HepG2 (cell line): ENCODE measurements at regions of chr7 and their contacts with region 1.

Region 1: GRCh38 chr7:74579800-74580685 is 77.5 kb upstream of the GTF2I start:
- DNase-seq: peak; percentile 94
- ATAC-seq: peak; percentile 93
- H3K4me3 ChIP-seq: peak overlapping the region in 2 of 3 experiments; percentile 58; a peak in 4 of 6 replicates
- H3K27ac ChIP-seq: peak overlapping the region; percentile 97
- H3K4me1 ChIP-seq: peaks cover 64% of the 10 kb centered on the region
- H3K27me3 ChIP-seq: no peaks in the 10 kb centered on the region
- CTCF ChIP-seq: 0 out of 2 replicates have a peak, but pooled peaks have one; percentile 1
- EP300 ChIP-seq: peak; percentile 65 to 74; a peak in 3 of 4 replicates
- POLR2A ChIP-seq: peak; percentile 58 to 77; a peak in 3 of 4 replicates
- RAD21 ChIP-seq: peak; percentile 51; the same call in 1 of the 2 replicates

Region 2: GRCh38 chr7:74606101-74606908 is 26.3 kb after region 1 on chr7:
- CTCF ChIA-PET with region 1: no interaction called
- POLR2A ChIA-PET with region 1: interaction called, 43 read pairs
- in situ Hi-C with region 1: no loop called
- intact Hi-C with region 1: loop called (anchors 1 kb)
- DNase-seq: no peak
- ATAC-seq: no peak
- H3K4me3 ChIP-seq: no peak overlapping the region
- H3K27ac ChIP-seq: peak overlapping the region; percentile 22
- H3K4me1 ChIP-seq: peaks cover 37% of the 10 kb centered on the region
- H3K27me3 ChIP-seq: no peaks in the 10 kb centered on the region
- CTCF ChIP-seq: no peak
- EP300 ChIP-seq: no peak
- POLR2A ChIP-seq: no peak
- RAD21 ChIP-seq: no peak

Region 3: DNA sequence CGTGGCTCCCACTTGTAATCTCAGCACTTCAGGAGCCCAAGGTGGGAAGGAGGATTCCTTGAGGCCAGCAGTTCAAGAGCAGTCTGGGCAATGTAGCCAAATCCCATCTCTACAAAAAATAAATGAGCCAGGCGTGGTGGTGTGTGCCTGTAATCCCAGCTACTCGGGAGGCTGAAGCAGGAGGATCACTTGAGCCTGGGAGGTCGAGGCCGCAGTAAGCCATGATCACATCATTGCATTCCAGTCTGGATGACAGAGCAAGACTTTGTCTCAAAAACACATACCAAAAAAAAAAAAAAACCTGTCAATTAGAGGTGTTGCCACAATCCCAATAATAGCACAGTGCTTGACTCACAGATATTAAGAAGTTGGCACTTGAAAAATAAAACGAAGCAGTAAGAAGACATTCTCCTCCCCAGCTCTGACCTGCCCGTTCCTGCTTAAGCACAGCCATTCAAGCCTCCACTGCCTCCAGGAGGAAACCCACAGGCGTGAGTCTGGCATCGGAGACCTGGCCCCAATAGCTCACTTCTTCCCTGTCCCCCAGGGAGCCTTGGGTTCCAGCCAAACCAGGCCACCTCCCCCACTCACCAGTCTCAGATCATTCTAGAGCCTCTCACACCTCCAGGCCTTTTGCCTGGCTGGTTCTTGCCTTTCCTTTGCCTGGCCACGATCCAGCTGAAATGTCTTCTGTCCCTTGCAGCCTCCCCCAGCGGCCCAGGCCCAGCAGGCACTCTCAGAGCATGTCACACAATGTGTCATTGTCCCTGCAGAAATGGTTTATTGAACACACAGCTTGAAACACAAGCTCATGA is 32.2 kb after region 1 on chr7:
- CTCF ChIA-PET with region 1: no interaction called
- POLR2A ChIA-PET with region 1: interaction called, 43 read pairs
- in situ Hi-C with region 1: no loop called
- intact Hi-C with region 1: loop called (anchors 1 kb)
- DNase-seq: peak; percentile 74
- ATAC-seq: peak; percentile 30
- H3K4me3 ChIP-seq: peak overlapping the region in 1 of 3 experiments; percentile 50; a peak in 2 of 6 replicates
- H3K27ac ChIP-seq: peak overlapping the region; percentile 96
- H3K4me1 ChIP-seq: peaks cover 78% of the 10 kb centered on the region
- H3K27me3 ChIP-seq: no peaks in the 10 kb centered on the region
- CTCF ChIP-seq: peak; percentile 24; the same call in 1 of the 2 replicates
- EP300 ChIP-seq: no peak
- POLR2A ChIP-seq: no peak
- RAD21 ChIP-seq: no peak

Region 4: GRCh38 chr7:74617180-74617744 is 37.2 kb after region 1 on chr7:
- CTCF ChIA-PET with region 1: no interaction called
- POLR2A ChIA-PET with region 1: interaction called, 43 read pairs
- in situ Hi-C with region 1: no loop called
- intact Hi-C with region 1: no loop called
- DNase-seq: no peak
- ATAC-seq: peak; percentile 26
- H3K4me3 ChIP-seq: no peak overlapping the region
- H3K27ac ChIP-seq: no peak overlapping the region
- H3K4me1 ChIP-seq: peaks cover 51% of the 10 kb centered on the region
- H3K27me3 ChIP-seq: no peaks in the 10 kb centered on the region
- CTCF ChIP-seq: no peak
- EP300 ChIP-seq: no peak
- POLR2A ChIP-seq: no peak
- RAD21 ChIP-seq: no peak

Region 5: GRCh38 chr7:74627661-74628411 is 47.8 kb after region 1 on chr7:
- CTCF ChIA-PET with region 1: no interaction called
- POLR2A ChIA-PET with region 1: interaction called, 13 read pairs
- in situ Hi-C with region 1: no loop called
- intact Hi-C with region 1: no loop called
- DNase-seq: peak; percentile 93
- ATAC-seq: peak; percentile 90
- H3K4me3 ChIP-seq: peak overlapping the region; percentile 36 to 53 (median 44); a peak in 5 of 6 replicates
- H3K27ac ChIP-seq: peak overlapping the region; percentile 81
- H3K4me1 ChIP-seq: peaks cover 63% of the 10 kb centered on the region
- H3K27me3 ChIP-seq: no peaks in the 10 kb centered on the region
- CTCF ChIP-seq: no peak
- EP300 ChIP-seq: peak in 1 of 2 experiments; percentile 56; a peak in 1 of 4 replicates
- POLR2A ChIP-seq: no peak
- RAD21 ChIP-seq: peak; percentile 18; the same call in 1 of the 2 replicates

Region 6: DNA sequence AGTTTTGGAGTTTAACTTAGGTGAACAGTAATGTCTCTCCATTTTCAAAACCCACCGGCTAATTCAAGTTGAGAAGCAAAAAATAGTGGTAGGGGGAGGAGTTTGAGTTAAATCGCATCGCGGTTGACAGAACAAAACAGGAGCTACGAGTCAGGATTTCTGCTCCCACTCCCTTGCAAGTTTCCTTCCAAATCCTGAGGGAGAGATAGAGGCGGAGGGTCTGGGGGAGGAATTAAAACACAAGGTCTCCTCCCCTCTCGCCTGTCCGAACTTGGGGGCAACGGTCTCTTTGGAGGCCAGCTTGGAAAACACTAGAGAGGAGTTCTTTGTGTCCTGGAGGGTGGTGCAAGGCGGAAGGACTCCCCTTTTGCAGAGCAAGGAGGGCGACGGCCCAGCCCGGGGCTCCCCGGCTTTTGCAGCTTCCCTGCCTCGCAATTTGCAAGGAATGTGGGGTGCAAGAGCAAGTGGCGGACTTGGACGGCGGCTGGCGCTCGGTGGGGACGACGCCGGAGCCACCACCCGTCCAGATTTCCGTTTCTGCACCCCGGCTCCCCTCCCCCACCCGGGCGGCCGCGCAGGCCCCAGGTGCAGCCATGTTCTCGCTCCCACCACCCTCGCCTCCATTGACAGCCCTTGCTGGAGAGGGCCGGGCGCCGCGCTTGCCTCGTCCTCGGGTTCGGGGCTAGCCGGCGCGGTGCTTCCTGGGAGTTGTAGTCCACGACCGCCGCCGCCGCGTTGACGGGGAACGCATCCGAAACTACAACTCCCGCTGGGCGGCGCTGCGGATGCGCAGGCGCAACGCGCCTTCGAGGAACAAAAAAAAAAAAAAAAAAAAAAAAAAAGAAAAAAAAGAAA is 77.0 kb after region 1 on chr7:
- CTCF ChIA-PET with region 1: no interaction called
- POLR2A ChIA-PET with region 1: interaction called, 33 read pairs
- in situ Hi-C with region 1: loop called (anchors 5 kb)
- intact Hi-C with region 1: loop called (anchors 1 kb)
- DNase-seq: peak; percentile 94
- ATAC-seq: peak; percentile 85
- H3K4me3 ChIP-seq: peak overlapping the region; percentile 73 to 91 (median 84)
- H3K27ac ChIP-seq: peak overlapping the region; percentile 98
- H3K4me1 ChIP-seq: peaks cover 66% of the 10 kb centered on the region
- H3K27me3 ChIP-seq: no peaks in the 10 kb centered on the region; a peak in 1 of 5 replicates
- CTCF ChIP-seq: peak; percentile 38
- EP300 ChIP-seq: no peak
- POLR2A ChIP-seq: peak; percentile 73
- RAD21 ChIP-seq: peak; percentile 54; the same call in 1 of the 2 replicates